ENCODE measurements at regions of chr2 and their contacts with region 1.

Region 1: GRCh38 chr2:68251187-68251854 is 1.0 kb downstream of the PPP3R1 start:
- DNase-seq: peak; percentile 90
- H3K4me3 Mint-ChIP-seq: peak overlapping the region; percentile 97
- H3K27ac Mint-ChIP-seq: peak overlapping the region; percentile 94
- H3K4me1 Mint-ChIP-seq: peaks cover 38% of the 10 kb centered on the region
- H3K27me3 Mint-ChIP-seq: no peaks in the 10 kb centered on the region

Region 2: DNA sequence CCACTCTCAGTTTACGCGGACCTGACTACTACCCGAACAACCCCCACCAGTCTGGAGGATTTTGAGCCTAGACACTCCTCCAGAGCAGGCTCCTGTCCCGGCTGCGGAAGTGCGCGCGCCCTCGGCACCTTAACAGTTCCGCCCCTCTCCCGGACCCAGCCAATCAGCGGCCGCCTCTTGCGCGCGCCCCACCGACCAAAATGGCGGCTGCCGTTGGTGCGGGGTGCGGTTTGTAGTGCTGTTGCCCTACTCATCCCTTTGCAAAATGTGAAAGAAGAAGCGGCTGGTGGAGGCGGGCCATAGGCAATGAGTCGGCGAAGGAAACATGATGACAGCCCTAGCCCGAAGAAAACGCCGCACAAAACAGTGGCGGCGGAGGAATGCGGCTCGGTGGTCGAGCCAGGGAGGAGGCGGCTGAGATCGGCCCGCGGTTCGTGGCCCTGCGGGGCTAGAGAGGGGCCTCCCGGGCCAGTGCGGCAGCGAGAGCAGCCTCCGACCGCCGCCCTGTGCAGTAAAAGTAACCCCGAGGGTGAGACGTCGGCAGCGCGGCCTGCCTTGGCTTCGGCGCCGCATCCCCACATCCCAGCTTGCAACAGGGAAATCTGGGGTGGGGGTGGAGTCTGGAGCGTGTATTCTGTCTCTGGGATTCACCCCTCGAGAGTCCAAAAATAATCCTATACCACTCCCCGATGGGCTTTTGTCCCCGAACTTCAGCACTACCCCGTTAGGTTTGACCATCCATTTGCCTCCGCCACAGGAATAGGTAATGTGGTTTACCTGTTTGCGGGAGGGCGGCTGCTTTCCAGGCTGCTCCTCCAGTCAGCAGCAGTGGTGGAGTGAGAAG is 854.0 kb before region 1 on chr2 and contains the start of gene ETAA1:
- CTCF ChIA-PET with region 1: no interaction called
- intact Hi-C with region 1: loop called (anchors 2 kb)
- DNase-seq: peak; percentile 95
- H3K4me3 Mint-ChIP-seq: peak within 1 kb of the TSS; percentile 97
- H3K27ac Mint-ChIP-seq: peak within 1 kb of the TSS; percentile 98
- H3K4me1 Mint-ChIP-seq: peaks cover 20% of the 10 kb centered on the region
- H3K27me3 Mint-ChIP-seq: no peaks in the 10 kb centered on the region
- total RNA-seq, gene ETAA1: 12.8 to 14.0 TPM

Region 3: GRCh38 chr2:68134554-68134953 is 116.8 kb before region 1 on chr2:
- CTCF ChIA-PET with region 1: no interaction called
- intact Hi-C with region 1: no loop called
- DNase-seq: no peak
- H3K4me3 Mint-ChIP-seq: no peak overlapping the region
- H3K27ac Mint-ChIP-seq: no peak overlapping the region
- H3K4me1 Mint-ChIP-seq: no peaks in the 10 kb centered on the region
- H3K27me3 Mint-ChIP-seq: no peaks in the 10 kb centered on the region

Region 4: DNA sequence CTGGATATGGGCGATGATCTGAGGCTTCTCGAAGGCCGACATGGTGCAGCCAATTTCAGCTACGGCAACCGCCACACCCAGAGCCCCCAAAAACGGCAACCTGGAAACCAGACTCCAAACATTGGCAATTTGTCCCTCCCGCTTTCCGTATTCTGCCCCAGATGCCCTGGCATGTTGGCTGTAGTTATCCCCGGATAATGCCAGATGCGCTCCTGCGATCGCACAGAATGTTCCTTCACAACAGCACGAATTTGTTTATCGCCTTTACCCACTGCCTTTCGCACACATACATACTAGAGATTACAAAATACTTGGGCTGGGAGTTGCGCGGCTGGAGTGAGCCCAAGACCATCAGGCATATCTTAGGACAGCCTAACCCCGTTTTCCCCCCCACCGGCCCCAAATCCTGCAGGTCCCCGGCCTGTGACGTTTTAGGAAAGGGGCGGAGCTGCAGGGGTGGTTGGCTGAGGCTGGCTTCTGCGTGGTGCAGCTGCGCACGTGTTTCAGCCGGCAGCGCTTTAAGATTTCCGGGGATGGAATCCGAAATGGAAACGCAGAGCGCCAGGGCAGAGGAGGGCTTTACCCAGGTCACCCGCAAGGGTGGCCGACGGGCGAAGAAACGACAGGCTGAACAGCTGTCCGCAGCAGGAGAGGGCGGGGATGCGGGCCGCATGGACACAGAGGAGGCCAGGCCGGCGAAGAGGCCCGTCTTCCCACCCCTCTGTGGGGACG is 93.8 kb before region 1 on chr2 and contains the start of gene PNO1:
- CTCF ChIA-PET with region 1: interaction called, 4 read pairs
- intact Hi-C with region 1: loop called (anchors 1 kb)
- DNase-seq: peak; percentile 98
- H3K4me3 Mint-ChIP-seq: peak within 1 kb of the TSS; percentile 91
- H3K27ac Mint-ChIP-seq: peak within 1 kb of the TSS; percentile 99
- H3K4me1 Mint-ChIP-seq: peaks cover 54% of the 10 kb centered on the region
- H3K27me3 Mint-ChIP-seq: no peaks in the 10 kb centered on the region
- total RNA-seq, gene PNO1: 14.5 to 14.6 TPM

Region 5: DNA sequence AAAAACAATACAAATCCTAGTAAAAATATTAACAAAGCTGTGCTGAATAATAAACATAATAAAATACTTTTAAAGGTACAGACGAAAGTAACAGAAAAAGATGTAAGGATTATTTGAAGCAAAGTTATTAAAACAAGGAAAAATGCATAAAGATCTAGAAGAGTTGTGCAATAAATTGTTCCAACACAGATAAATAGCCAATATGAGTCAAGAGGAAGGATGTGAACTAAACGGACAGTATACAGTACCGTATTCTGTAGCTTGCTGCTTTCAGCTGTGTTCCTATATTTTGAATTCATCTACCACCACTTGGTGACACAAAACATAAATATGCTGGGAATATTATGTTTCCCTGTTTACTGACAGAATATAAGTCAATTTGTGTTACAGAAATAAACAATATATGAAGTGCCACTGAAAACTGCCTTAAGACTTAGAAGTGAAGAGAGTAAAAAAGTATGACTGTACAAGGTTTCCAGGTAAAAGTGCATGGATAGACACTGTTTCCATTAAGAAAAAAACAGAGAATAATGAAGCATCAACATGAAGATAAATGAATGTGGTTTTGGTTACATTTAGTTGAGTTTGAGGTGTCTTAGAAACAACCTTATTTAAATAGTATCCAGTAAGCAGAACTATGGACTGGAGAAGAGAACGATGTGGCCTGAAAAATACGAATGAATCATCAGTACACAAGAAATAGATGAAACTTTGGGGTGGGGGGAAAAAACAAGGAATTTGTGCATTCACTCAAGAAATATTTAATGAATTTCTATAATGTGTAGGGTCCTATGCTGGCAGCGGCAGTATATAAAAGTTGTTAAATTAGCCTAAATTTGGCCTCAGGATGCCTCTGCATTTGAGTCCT is 12.1 kb before region 1 on chr2:
- CTCF ChIA-PET with region 1: interaction called, 3 read pairs
- intact Hi-C with region 1: loop called (anchors 1 kb)
- DNase-seq: no peak
- H3K4me3 Mint-ChIP-seq: no peak overlapping the region
- H3K27ac Mint-ChIP-seq: no peak overlapping the region
- H3K4me1 Mint-ChIP-seq: peaks cover 76% of the 10 kb centered on the region
- H3K27me3 Mint-ChIP-seq: no peaks in the 10 kb centered on the region

Region 6: GRCh38 chr2:68441179-68441993 is 190.1 kb after region 1 on chr2:
- CTCF ChIA-PET with region 1: interaction called, 7 read pairs
- intact Hi-C with region 1: loop called (anchors 2 kb)
- DNase-seq: peak; percentile 92
- H3K4me3 Mint-ChIP-seq: no peak overlapping the region
- H3K27ac Mint-ChIP-seq: peak overlapping the region; percentile 28
- H3K4me1 Mint-ChIP-seq: peaks cover 15% of the 10 kb centered on the region
- H3K27me3 Mint-ChIP-seq: peaks cover 2% of the 10 kb centered on the region

Region 7: GRCh38 chr2:68766376-68766845 is 515.1 kb after region 1 on chr2:
- CTCF ChIA-PET with region 1: no interaction called
- intact Hi-C with region 1: loop called (anchors 5 kb)
- DNase-seq: peak; percentile 77
- H3K4me3 Mint-ChIP-seq: peak overlapping the region; percentile 77
- H3K27ac Mint-ChIP-seq: peak overlapping the region; percentile 95
- H3K4me1 Mint-ChIP-seq: peaks cover 97% of the 10 kb centered on the region
- H3K27me3 Mint-ChIP-seq: no peaks in the 10 kb centered on the region